PC-3 (cell line): ENCODE measurements at regions of chr2 and their contacts with region 1.

Region 1: DNA sequence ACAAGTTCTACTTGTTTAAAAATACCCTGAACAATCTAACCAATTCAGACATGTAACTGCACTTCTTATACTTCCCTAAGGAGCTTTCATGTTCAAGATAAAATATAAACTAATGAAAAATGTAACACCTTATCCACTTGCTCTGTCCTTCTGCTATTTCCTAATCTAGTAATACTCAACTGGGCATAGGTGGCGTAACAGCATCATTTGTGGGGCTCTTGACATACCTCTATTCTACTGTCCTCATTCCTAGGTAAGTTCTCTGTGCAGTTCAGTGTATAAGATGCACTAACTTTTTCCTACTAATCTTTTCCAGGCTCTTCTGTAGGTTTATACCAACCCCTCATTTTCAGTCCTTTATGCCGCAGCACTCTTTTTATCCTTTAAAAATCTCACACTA is 36.7 kb downstream of the PRKD3 start:
- DNase-seq: peak; percentile 27
- ATAC-seq: peak; percentile 79
- H3K4me3 ChIP-seq: no peak overlapping the region
- H3K27ac ChIP-seq: no peak overlapping the region
- H3K4me1 ChIP-seq: 0 out of 2 replicates have a peak, but pooled peaks cover 6% of the 10 kb centered on the region
- H3K27me3 ChIP-seq: no peaks in the 10 kb centered on the region
- CTCF ChIP-seq: peak; percentile 59

Region 2: DNA sequence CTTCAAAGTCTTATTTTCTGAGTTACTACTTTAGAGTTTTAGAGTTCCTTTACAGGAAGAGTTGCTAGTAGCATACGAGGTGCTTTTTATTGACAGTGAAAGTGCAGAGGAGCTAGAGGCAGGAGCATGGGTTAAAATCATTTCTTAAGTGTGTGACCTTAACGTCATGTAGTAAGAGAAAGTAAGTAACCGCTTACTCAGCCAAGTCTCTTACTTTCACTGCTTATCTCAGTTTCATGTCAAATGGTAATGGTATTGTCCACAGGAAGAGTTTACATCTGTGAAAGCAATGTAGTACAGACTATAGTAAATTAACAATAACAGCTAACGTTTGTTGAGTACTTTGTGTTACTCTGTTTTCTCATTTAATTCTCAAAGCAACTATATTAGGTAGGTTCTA is 43.9 kb before region 1 on chr2:
- CTCF ChIA-PET with region 1: no interaction called
- POLR2A ChIA-PET with region 1: no interaction called
- intact Hi-C with region 1: no loop called
- DNase-seq: no peak
- ATAC-seq: no peak
- H3K4me3 ChIP-seq: no peak overlapping the region
- H3K27ac ChIP-seq: no peak overlapping the region
- H3K4me1 ChIP-seq: no peaks in the 10 kb centered on the region
- H3K27me3 ChIP-seq: no peaks in the 10 kb centered on the region
- CTCF ChIP-seq: no peak

Region 3: GRCh38 chr2:37324786-37325624 is 37.0 kb after region 1 on chr2 and contains the start of gene PRKD3:
- CTCF ChIA-PET with region 1: no interaction called
- POLR2A ChIA-PET with region 1: no interaction called
- intact Hi-C with region 1: no loop called
- DNase-seq: peak; percentile 69
- ATAC-seq: peak; percentile 70
- H3K4me3 ChIP-seq: peak within 1 kb of the TSS; percentile 93
- H3K27ac ChIP-seq: peak within 1 kb of the TSS; percentile 44
- H3K4me1 ChIP-seq: peaks cover 26% of the 10 kb centered on the region
- H3K27me3 ChIP-seq: no peaks in the 10 kb centered on the region
- CTCF ChIP-seq: no peak
- total RNA-seq, gene PRKD3: 26.4 and 27.2 TPM in 2 replicates

Region 4: DNA sequence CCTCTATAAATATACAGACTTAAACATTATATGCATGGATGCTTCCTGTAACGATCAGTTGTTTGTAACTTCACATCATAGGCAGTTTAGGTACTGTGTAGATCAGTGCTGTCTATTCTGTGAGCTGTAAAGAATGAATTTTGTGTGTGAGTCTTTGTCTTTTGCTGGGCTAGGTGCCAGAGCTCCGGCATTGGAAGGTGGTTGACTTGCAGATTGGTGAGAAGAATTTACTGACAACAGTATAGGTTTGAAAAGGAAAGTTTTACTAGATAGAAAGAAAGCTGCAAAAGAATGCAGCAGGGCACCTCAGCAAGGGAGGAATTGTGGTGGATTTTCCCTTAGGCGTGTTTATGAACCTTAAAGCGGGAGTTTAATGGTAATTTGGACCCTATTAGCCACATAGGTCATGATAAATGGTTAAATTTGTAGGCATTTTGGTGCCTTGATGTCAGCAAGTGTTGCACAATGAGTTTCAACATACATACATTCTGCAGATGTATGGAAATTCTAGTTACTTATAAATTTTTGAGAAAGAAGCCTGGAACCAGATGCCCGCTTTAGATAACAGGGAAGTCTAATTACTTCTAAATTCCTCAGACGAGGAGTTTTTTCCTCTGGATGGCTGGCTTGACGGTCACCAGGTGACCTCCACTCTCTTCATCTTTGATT is 49.8 kb after region 1 on chr2:
- CTCF ChIA-PET with region 1: no interaction called
- POLR2A ChIA-PET with region 1: no interaction called
- intact Hi-C with region 1: no loop called
- DNase-seq: no peak
- ATAC-seq: no peak
- H3K4me3 ChIP-seq: no peak overlapping the region
- H3K27ac ChIP-seq: no peak overlapping the region
- H3K4me1 ChIP-seq: no peaks in the 10 kb centered on the region
- H3K27me3 ChIP-seq: no peaks in the 10 kb centered on the region
- CTCF ChIP-seq: no peak

Region 5: GRCh38 chr2:37832590-37833197 is 544.7 kb after region 1 on chr2:
- CTCF ChIA-PET with region 1: no interaction called
- POLR2A ChIA-PET with region 1: no interaction called
- intact Hi-C with region 1: loop called (anchors 5 kb)
- DNase-seq: peak; percentile 94
- ATAC-seq: peak; percentile 99
- H3K4me3 ChIP-seq: no peak overlapping the region
- H3K27ac ChIP-seq: no peak overlapping the region
- H3K4me1 ChIP-seq: peaks cover 6% of the 10 kb centered on the region; the same call in 1 of the 2 replicates
- H3K27me3 ChIP-seq: no peaks in the 10 kb centered on the region
- CTCF ChIP-seq: peak; percentile 95

Region 6: GRCh38 chr2:37877457-37878315 is 589.7 kb after region 1 on chr2:
- CTCF ChIA-PET with region 1: no interaction called
- POLR2A ChIA-PET with region 1: no interaction called
- intact Hi-C with region 1: loop called (anchors 5 kb)
- DNase-seq: peak; percentile 86
- ATAC-seq: peak; percentile 76
- H3K4me3 ChIP-seq: 0 out of 2 replicates have a peak overlapping the region, but pooled peaks have one; percentile 24
- H3K27ac ChIP-seq: no peak overlapping the region
- H3K4me1 ChIP-seq: no peaks in the 10 kb centered on the region
- H3K27me3 ChIP-seq: no peaks in the 10 kb centered on the region
- CTCF ChIP-seq: peak; percentile 86